ENCODE measurements at regions of chr17 and their contacts with region 1.

Region 1: GRCh38 chr17:8288336-8289102 is at the start of gene RANGRF:
- DNase-seq: peak; percentile 42 to 93
- H3K4me3 ChIP-seq: peak within 1 kb of the TSS; percentile 81 to 87
- H3K27ac ChIP-seq: peak within 1 kb of the TSS; percentile 89 to 94
- H3K4me1 ChIP-seq: peaks cover 4 to 11% of the 10 kb centered on the region in 2 donors
- H3K27me3 ChIP-seq: no peaks in the 10 kb centered on the region
- CTCF ChIP-seq: no peak
- total RNA-seq, gene RANGRF: 15.5 TPM

Region 2: DNA sequence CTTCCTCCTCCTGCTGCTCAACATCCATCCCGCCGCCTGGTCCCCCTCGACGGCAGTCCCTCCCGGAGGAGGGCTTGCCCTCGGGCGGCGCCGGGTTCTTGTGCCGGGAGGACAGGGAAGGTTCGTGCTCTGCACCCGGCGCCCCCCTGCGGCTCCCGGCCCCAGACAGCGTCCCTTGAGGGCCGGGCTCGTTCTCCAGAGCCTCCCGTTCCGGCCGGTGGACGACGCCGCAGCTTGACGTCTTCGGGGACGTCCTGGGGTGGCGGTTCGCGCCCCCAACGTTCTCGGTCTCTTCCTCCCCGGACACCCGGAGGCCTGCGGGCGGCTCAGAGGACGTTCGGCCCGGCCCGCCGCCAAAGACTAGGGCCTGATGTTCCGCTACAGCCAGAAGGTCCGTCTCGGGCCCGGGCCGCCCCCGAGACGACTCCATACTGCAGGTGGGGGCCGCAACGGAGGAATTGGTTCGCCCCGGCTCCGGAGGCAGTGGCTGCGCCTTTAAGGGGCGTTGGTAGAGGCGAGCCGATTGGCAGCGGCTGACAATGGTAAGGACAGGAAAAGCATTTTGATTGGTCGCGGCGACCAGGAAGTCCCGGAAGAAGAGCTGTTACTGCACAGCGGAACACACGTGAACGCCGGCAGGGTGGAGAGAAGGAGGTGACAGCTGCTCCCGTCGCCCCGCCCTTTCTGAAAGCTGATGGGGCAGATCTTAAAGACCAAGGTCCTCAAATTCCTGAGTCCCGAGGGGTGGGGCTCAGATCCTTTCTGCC is 98.6 kb before region 1 on chr17 and contains the start of gene BORCS6:
- intact Hi-C with region 1: no loop called
- DNase-seq: peak; percentile 97 to 99
- H3K4me3 ChIP-seq: peak within 1 kb of the TSS; percentile 69 to 81
- H3K27ac ChIP-seq: peak within 1 kb of the TSS; percentile 96 to 97
- H3K4me1 ChIP-seq: peaks cover 14 to 28% of the 10 kb centered on the region in 2 donors
- H3K27me3 ChIP-seq: no peaks in the 10 kb centered on the region
- CTCF ChIP-seq: peak in 1 of 3 experiments; percentile 6
- total RNA-seq, gene BORCS6: 29.5 TPM

Region 3: DNA sequence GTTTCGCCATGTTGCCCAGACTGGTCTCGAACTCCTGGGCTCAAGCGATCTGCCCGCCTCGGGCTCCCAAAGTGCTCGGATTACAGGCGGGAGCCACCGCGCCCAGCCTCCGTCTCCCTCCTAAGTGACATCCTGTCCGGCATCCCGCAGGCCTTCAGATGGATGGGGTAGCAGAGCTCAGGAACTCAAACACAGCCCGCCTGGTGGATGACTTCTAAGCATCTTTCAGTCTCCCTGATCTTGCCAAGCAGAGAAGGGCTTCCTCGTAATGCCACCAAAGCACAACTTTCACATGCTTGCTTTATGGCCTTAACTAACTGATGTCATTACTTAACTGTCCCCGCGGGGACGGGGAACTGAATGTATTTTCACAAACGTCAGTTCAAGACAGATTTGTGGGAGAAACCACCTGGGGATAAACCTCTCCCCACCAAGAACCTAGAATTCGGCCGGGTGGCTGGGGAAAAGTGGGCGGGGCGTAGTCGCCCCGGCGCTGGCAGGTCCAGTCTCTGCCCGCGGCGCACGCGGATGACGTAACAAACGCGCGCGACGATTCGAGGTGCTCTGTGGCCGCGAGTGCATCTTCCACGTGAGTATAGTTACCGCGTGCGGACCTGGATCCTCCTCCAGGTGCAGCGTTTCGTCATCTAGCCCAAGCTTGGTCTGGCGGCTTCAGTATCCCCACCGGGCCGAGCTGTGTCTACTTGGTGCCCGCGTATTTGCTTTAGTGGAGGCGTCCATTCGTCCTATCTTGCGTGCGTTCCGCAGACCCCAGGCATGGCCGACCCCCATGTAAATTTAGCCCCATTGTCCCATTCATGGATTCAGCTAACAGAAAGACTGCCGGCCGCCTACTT is 39.5 kb before region 1 on chr17 and contains the start of gene PFAS:
- intact Hi-C with region 1: loop called (anchors 1 kb)
- DNase-seq: peak; percentile 75 to 98
- H3K4me3 ChIP-seq: peak within 1 kb of the TSS; percentile 80 to 82
- H3K27ac ChIP-seq: peak within 1 kb of the TSS; percentile 94 to 98
- H3K4me1 ChIP-seq: peaks cover 0 to 6% of the 10 kb centered on the region in 2 donors
- H3K27me3 ChIP-seq: no peaks in the 10 kb centered on the region
- CTCF ChIP-seq: peak in 1 of 3 experiments; percentile 20
- total RNA-seq, gene PFAS: 108 TPM

Region 4: GRCh38 chr17:8300627-8301242 is 12.2 kb after region 1 on chr17:
- intact Hi-C with region 1: no loop called
- DNase-seq: peak; percentile 20 to 70
- H3K4me3 ChIP-seq: no peak overlapping the region
- H3K27ac ChIP-seq: no peak overlapping the region
- H3K4me1 ChIP-seq: no peaks in the 10 kb centered on the region
- H3K27me3 ChIP-seq: no peaks in the 10 kb centered on the region
- CTCF ChIP-seq: peak; percentile 59 to 83 (median 76)

Region 5: GRCh38 chr17:8673612-8674011 is 385.1 kb after region 1 on chr17:
- intact Hi-C with region 1: no loop called
- DNase-seq: peak in 1 of 2 donors; percentile 85
- H3K4me3 ChIP-seq: peak overlapping the region in 1 of 2 donors; percentile 38
- H3K27ac ChIP-seq: peak overlapping the region; percentile 93 to 95
- H3K4me1 ChIP-seq: peaks cover 9 to 55% of the 10 kb centered on the region in 2 donors
- H3K27me3 ChIP-seq: no peaks in the 10 kb centered on the region
- CTCF ChIP-seq: no peak